T-cell (primary cell): ENCODE measurements at regions of chr18 and their contacts with region 1.

Region 1: GRCh38 chr18:62522504-62523254 is at the start of gene ZCCHC2:
- DNase-seq: peak; percentile 91 to 100 (median 97)
- ATAC-seq: peak; percentile 78 to 82 (median 79)
- H3K4me3 ChIP-seq: peak within 1 kb of the TSS; percentile 90 to 96
- H3K4me3 Mint-ChIP-seq: peak within 1 kb of the TSS; percentile 89 to 92 (median 90)
- H3K27ac ChIP-seq: peak within 1 kb of the TSS; percentile 71
- H3K27ac Mint-ChIP-seq: peak within 1 kb of the TSS; percentile 75 to 78
- H3K4me1 ChIP-seq: peaks cover 10 to 25% of the 10 kb centered on the region in 2 experiments
- H3K4me1 Mint-ChIP-seq: peaks cover 32 to 42% (median 40%) of the 10 kb centered on the region in 3 donors
- H3K27me3 ChIP-seq: no peaks in the 10 kb centered on the region
- H3K27me3 Mint-ChIP-seq: no peaks in the 10 kb centered on the region
- total RNA-seq, gene ZCCHC2: 46.1 to 88.0 (median 52.2) TPM

Region 2: GRCh38 chr18:61236356-61237057 is 1286.2 kb before region 1 on chr18:
- CTCF ChIA-PET with region 1: no interaction called
- POLR2A ChIA-PET with region 1: no interaction called
- DNase-seq: no peak
- ATAC-seq: no peak
- H3K4me3 ChIP-seq: no peak overlapping the region
- H3K4me3 Mint-ChIP-seq: no peak overlapping the region
- H3K27ac ChIP-seq: no peak overlapping the region
- H3K27ac Mint-ChIP-seq: no peak overlapping the region
- H3K4me1 ChIP-seq: no peaks in the 10 kb centered on the region
- H3K4me1 Mint-ChIP-seq: no peaks in the 10 kb centered on the region
- H3K27me3 ChIP-seq: no peaks in the 10 kb centered on the region
- H3K27me3 Mint-ChIP-seq: no peaks in the 10 kb centered on the region

Region 3: GRCh38 chr18:62300359-62300963 is 222.2 kb before region 1 on chr18:
- CTCF ChIA-PET with region 1: no interaction called
- POLR2A ChIA-PET with region 1: interaction called in 1 of 2 experiments, 11 read pairs
- DNase-seq: peak in 1 of 35 experiments; percentile 1
- ATAC-seq: peak in 2 of 4 experiments; percentile 17 to 70
- H3K4me3 ChIP-seq: no peak overlapping the region
- H3K4me3 Mint-ChIP-seq: peak overlapping the region in 1 of 3 donors; percentile 44
- H3K27ac ChIP-seq: no peak overlapping the region
- H3K27ac Mint-ChIP-seq: peak overlapping the region; percentile 50 to 82
- H3K4me1 ChIP-seq: peaks cover 0 to 14% of the 10 kb centered on the region in 2 experiments
- H3K4me1 Mint-ChIP-seq: peaks cover 12 to 22% (median 20%) of the 10 kb centered on the region in 3 donors
- H3K27me3 ChIP-seq: no peaks in the 10 kb centered on the region
- H3K27me3 Mint-ChIP-seq: no peaks in the 10 kb centered on the region

Region 4: DNA sequence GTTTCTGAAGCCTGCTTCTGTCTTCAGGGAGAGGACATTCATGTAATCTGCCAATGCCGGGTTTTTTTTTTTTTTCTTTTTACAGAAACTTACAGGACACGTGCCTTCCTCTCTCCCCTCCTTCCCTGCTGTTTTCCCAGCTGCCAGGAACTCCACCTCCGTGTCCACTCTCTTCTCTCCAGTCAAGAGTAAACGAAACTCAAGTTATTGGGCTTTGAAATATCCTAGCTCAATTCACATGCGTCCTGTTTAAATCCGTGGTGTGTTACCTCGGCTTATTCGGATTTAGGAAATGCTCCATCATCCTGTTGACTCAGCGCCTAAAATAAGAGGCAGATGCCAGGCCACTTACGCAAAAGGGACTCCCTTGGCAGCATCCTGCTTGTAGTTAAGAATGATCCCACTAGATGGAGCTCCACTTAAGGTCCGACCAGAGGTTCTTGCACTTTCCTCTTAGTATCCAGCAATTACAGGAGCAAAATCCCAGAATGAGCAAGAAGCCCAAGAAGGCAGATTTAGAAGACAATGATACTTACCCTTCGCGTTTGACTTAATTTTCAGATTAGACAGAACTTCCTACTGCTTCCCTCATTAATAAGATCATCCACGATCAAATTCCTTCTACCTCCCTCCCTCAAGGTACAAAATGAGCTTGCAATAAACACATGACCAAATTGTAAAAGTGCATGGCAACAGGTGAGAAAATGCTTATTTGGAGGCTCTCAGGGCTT is 97.0 kb before region 1 on chr18:
- CTCF ChIA-PET with region 1: interaction called, 4 to 10 read pairs
- POLR2A ChIA-PET with region 1: no interaction called
- DNase-seq: peak in 30 of 35 experiments; percentile 5 to 80 (median 32)
- ATAC-seq: peak; percentile 26 to 64 (median 44)
- H3K4me3 ChIP-seq: no peak overlapping the region
- H3K4me3 Mint-ChIP-seq: no peak overlapping the region
- H3K27ac ChIP-seq: no peak overlapping the region
- H3K27ac Mint-ChIP-seq: peak overlapping the region in 1 of 2 donors; percentile 10
- H3K4me1 ChIP-seq: peaks cover 0 to 8% of the 10 kb centered on the region in 2 experiments
- H3K4me1 Mint-ChIP-seq: peaks cover 20 to 22% (median 21%) of the 10 kb centered on the region in 3 donors
- H3K27me3 ChIP-seq: peaks cover 0 to 2% of the 10 kb centered on the region in 2 experiments
- H3K27me3 Mint-ChIP-seq: peaks cover 0 to 4% of the 10 kb centered on the region in 2 donors

Region 5: GRCh38 chr18:62536010-62536409 is 13.3 kb after region 1 on chr18:
- CTCF ChIA-PET with region 1: no interaction called
- POLR2A ChIA-PET with region 1: interaction called in 1 of 2 experiments, 12 read pairs
- DNase-seq: no peak
- ATAC-seq: no peak
- H3K4me3 ChIP-seq: no peak overlapping the region
- H3K4me3 Mint-ChIP-seq: no peak overlapping the region
- H3K27ac ChIP-seq: no peak overlapping the region
- H3K27ac Mint-ChIP-seq: no peak overlapping the region
- H3K4me1 ChIP-seq: peaks cover 0 to 22% of the 10 kb centered on the region in 2 experiments
- H3K4me1 Mint-ChIP-seq: peaks cover 70 to 78% (median 76%) of the 10 kb centered on the region in 3 donors
- H3K27me3 ChIP-seq: no peaks in the 10 kb centered on the region
- H3K27me3 Mint-ChIP-seq: no peaks in the 10 kb centered on the region

Region 6: DNA sequence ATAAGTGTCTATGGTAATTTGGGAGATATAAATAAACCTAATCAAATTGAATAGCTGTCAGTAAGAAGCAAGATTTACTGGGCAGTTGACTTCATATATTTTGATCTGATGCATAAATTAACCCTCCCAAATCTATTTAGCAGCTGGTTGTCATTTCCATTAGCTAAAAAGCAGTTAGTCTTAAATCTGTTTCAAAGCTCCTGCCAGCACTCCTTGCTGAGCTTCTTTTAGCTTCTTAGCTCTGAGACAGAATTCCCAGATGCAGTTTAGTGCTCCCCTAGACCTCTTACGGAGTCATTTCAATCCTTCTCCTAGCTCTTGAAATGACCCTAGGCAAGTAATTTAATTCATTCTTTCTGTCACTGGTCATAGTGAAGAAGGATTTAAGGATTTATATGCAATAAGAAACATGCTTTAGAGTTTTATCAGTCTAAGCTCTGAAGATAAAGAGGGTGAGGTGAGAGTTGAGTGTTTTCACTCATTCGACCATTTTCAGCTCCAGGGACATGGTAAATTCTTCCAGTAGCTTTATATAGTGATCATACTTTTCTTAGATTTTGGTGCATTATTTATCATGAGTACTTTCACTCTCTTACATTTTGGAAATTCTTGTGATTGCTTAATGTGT is 291.6 kb after region 1 on chr18:
- CTCF ChIA-PET with region 1: no interaction called
- POLR2A ChIA-PET with region 1: no interaction called
- DNase-seq: no peak
- ATAC-seq: no peak
- H3K4me3 ChIP-seq: no peak overlapping the region
- H3K4me3 Mint-ChIP-seq: no peak overlapping the region
- H3K27ac ChIP-seq: no peak overlapping the region
- H3K27ac Mint-ChIP-seq: no peak overlapping the region
- H3K4me1 ChIP-seq: no peaks in the 10 kb centered on the region
- H3K4me1 Mint-ChIP-seq: peaks cover 0 to 8% (median 3%) of the 10 kb centered on the region in 3 donors
- H3K27me3 ChIP-seq: no peaks in the 10 kb centered on the region
- H3K27me3 Mint-ChIP-seq: no peaks in the 10 kb centered on the region